AG04450 (cell line): ENCODE measurements at regions of chr2 and their contacts with region 1.

Region 1: DNA sequence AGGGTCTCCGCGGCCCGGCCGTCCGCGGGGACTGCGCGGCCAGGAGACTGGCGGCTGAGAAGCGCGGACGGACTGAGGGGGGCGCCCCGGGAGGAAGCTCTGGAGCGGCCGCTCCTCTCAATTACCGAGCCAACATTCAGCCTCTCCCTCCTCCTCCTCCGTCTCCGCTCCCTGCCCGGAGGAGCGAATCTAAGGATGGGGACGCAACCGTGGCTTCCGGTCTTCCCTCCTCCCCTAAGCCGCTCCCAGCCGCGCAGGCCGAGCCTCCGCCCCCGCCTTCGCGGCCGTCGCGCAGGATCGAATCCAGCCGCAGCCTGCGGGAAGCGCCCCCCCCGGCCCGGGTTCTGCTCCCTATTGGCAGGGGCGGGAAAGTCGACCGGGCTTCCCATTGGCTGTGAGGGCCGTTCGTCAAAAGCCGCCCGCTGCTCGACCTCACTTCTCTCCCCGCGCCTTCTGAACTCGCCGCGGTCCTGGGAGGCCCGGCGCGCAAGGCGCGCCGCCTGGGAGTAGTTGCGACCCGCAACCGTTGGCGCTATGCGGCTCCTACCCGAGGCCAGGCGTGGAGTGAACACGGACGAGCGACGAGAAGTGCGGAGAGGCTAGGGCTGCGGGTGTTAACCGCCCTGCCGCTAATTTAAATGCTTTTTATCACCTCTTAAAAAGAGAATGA is at the start of gene HNRNPLL:
- DNase-seq: peak; percentile 93
- H3K4me3 ChIP-seq: peak within 1 kb of the TSS; percentile 81
- H3K27ac ChIP-seq: peak within 1 kb of the TSS; percentile 77
- H3K27me3 ChIP-seq: no peaks in the 10 kb centered on the region
- CTCF ChIP-seq: no peak
- polyA plus RNA-seq, gene HNRNPLL: 55.0 and 78.5 TPM in 2 replicates

Region 2: GRCh38 chr2:37865640-37866039 is 737.2 kb before region 1 on chr2:
- CTCF ChIA-PET with region 1: interaction called, 10 read pairs
- POLR2A ChIA-PET with region 1: no interaction called
- DNase-seq: no peak
- H3K4me3 ChIP-seq: no peak overlapping the region
- H3K27ac ChIP-seq: no peak overlapping the region
- H3K27me3 ChIP-seq: peaks cover 5% of the 10 kb centered on the region
- CTCF ChIP-seq: no peak

Region 3: GRCh38 chr2:38690499-38691294 is 87.8 kb after region 1 on chr2:
- CTCF ChIA-PET with region 1: no interaction called
- POLR2A ChIA-PET with region 1: interaction called, 13 read pairs
- DNase-seq: peak; percentile 84
- H3K4me3 ChIP-seq: no peak overlapping the region
- H3K27ac ChIP-seq: peak overlapping the region; percentile 90
- H3K27me3 ChIP-seq: no peaks in the 10 kb centered on the region
- CTCF ChIP-seq: no peak

Region 4: GRCh38 chr2:38720613-38721241 is 117.9 kb after region 1 on chr2:
- CTCF ChIA-PET with region 1: interaction called, 14 read pairs
- POLR2A ChIA-PET with region 1: interaction called, 4 read pairs
- DNase-seq: peak; percentile 94
- H3K4me3 ChIP-seq: no peak overlapping the region
- H3K27ac ChIP-seq: peak overlapping the region; percentile 59
- H3K27me3 ChIP-seq: no peaks in the 10 kb centered on the region
- CTCF ChIP-seq: no peak

Region 5: DNA sequence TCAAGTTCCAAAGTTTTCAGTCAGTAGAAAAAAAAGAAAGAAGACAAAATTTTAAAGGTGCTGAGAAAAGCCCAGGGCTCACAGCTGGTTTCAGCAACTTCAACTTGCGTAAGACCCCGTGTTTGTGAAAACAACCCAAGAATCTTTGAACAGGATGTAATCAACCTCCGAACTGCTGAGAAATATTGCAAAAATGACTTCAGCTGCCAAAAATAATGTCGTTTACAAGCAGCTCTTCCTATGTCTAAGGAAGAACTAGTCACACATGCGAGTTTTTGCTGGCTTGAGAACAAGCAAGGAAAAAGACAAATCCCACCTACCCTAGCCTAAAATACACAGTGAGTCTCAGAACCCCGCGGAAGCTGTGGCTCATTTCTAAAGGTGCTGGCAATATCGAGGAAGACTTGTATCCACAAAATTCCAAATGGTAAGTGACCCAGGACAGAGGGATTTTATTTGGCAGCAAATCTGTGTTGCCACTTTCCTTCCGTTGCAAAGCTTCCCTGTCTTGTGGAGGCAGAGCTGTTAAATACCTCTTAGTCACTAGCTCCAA is 1908.9 kb after region 1 on chr2:
- CTCF ChIA-PET with region 1: interaction called, 10 read pairs
- POLR2A ChIA-PET with region 1: no interaction called
- DNase-seq: peak; percentile 49
- H3K4me3 ChIP-seq: peak overlapping the region; percentile 27
- H3K27ac ChIP-seq: no peak overlapping the region
- H3K27me3 ChIP-seq: no peaks in the 10 kb centered on the region
- CTCF ChIP-seq: no peak